Naive thymus-derived CD4-positive, alpha-beta T cell (primary cell): ENCODE measurements at regions of chr18 and their contacts with region 1.

Region 1: DNA sequence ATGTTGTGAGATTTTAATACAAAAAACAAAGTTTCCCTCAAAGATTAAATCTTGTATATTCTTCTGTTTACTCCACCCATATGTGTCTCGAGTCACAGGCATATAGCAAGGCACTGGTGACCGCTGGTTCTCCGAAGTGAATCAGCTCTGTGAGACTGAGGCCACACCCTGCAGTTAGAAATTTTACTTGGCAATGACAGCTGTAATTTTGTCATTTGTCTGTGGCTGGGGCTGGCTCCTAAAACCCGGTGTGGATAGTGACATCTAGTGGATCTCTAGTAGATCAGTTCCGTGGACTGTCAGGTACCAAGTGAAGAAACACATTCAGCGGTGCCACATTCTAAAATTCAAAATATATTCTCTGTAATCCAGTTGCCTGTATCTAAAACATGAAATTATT is 278.0 kb downstream of the NEDD4L start:
- DNase-seq: peak in 8 of 9 donors; percentile 32 to 71 (median 64)
- ATAC-seq: peak; percentile 90
- H3K4me3 ChIP-seq: no peak overlapping the region
- H3K4me3 Mint-ChIP-seq: peak overlapping the region in 9 of 10 donors; percentile 31 to 75 (median 57)
- H3K27ac ChIP-seq: no peak overlapping the region
- H3K27ac Mint-ChIP-seq: peak overlapping the region in 8 of 9 donors; percentile 7 to 75 (median 58)
- H3K4me1 ChIP-seq: peaks cover 0 to 13% of the 10 kb centered on the region in 2 donors
- H3K4me1 Mint-ChIP-seq: peaks cover 7 to 25% (median 22%) of the 10 kb centered on the region in 7 donors
- H3K27me3 ChIP-seq: no peaks in the 10 kb centered on the region
- H3K27me3 Mint-ChIP-seq: peaks cover 0 to 12% (median 0%) of the 10 kb centered on the region in 5 donors

Region 2: GRCh38 chr18:58117786-58118403 is 204.1 kb before region 1 on chr18:
- CTCF ChIA-PET with region 1: interaction called, 4 read pairs
- POLR2A ChIA-PET with region 1: no interaction called
- intact Hi-C with region 1: loop called in 1 of 2 experiments (anchors 1 kb)
- DNase-seq: no peak
- ATAC-seq: peak; percentile 41
- H3K4me3 ChIP-seq: no peak overlapping the region
- H3K4me3 Mint-ChIP-seq: no peak overlapping the region
- H3K27ac ChIP-seq: no peak overlapping the region
- H3K27ac Mint-ChIP-seq: no peak overlapping the region
- H3K4me1 ChIP-seq: no peaks in the 10 kb centered on the region
- H3K4me1 Mint-ChIP-seq: peaks cover 0 to 9% (median 0%) of the 10 kb centered on the region in 7 donors
- H3K27me3 ChIP-seq: no peaks in the 10 kb centered on the region
- H3K27me3 Mint-ChIP-seq: peaks cover 0 to 14% (median 4%) of the 10 kb centered on the region in 5 donors

Region 3: DNA sequence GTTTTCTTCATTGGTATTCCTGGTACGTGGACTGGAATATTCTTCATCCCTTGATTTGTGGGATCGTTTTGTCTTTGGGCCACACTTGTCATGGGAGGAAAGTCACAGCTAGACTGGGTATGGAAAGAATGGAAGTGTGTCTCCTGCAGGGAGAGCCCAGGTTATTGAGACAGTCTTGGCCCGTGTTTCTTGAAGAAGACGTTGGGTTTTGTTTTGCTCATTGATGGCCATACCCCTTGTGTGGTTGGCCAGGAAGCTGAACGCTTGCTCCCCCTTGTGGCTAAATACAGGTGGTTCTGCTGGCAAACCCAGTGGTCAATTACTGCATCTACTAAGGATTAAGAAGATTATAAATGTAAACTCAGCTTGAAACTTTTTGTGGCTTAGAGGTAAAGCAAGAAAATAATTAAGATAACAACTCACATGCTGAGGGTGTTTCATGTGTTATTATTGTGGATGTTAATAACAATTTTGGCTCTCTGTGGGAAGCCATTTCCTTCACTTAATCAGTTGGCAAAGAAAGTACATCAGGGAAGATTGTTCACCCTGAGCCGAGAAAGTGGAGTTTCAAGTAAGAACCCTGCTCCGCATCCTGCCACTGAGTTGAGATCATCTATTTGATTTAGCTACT is 186.2 kb before region 1 on chr18:
- CTCF ChIA-PET with region 1: no interaction called
- POLR2A ChIA-PET with region 1: no interaction called
- intact Hi-C with region 1: loop called in 1 of 2 experiments (anchors 1 kb)
- DNase-seq: peak in 7 of 9 donors; percentile 13 to 42 (median 28)
- ATAC-seq: peak; percentile 79
- H3K4me3 ChIP-seq: no peak overlapping the region
- H3K4me3 Mint-ChIP-seq: no peak overlapping the region
- H3K27ac ChIP-seq: no peak overlapping the region
- H3K27ac Mint-ChIP-seq: no peak overlapping the region
- H3K4me1 ChIP-seq: no peaks in the 10 kb centered on the region
- H3K4me1 Mint-ChIP-seq: peaks cover 5 to 14% (median 8%) of the 10 kb centered on the region in 7 donors
- H3K27me3 ChIP-seq: no peaks in the 10 kb centered on the region
- H3K27me3 Mint-ChIP-seq: peaks cover 12 to 31% (median 24%) of the 10 kb centered on the region in 5 donors

Region 4: DNA sequence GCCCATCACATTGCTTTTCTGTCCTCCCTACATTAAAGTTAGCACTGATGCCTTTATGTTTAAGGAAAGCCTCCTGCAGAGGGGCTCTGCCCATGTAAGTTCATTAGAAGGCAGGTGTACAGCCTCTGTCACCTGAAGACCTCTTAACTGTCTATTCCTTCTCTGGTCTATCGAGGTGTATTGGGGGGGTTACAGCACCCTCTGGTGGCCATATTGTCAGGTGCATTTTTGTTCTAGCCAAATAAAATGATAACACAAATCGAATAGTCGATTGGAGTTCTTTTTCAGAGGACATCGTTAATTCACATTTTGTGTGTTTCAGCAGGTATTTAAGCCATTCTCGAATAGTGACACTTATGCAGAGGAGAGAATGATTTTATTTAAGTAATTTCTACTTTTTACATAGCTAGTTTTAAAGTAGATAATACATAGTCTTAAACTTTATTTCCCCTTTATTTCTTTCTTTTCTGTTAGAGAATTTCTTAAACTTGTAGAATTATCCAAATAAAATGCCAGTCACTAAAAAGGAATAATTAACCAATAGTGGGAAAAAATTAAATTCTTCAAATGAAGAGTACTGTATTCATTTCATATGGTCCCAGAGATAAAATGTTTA is 141.1 kb before region 1 on chr18:
- CTCF ChIA-PET with region 1: interaction called, 12 read pairs
- POLR2A ChIA-PET with region 1: no interaction called
- intact Hi-C with region 1: loop called (anchors 1 kb)
- DNase-seq: peak; percentile 25 to 68 (median 50)
- ATAC-seq: peak; percentile 81
- H3K4me3 ChIP-seq: no peak overlapping the region
- H3K4me3 Mint-ChIP-seq: no peak overlapping the region
- H3K27ac ChIP-seq: no peak overlapping the region
- H3K27ac Mint-ChIP-seq: no peak overlapping the region
- H3K4me1 ChIP-seq: no peaks in the 10 kb centered on the region
- H3K4me1 Mint-ChIP-seq: peaks cover 0 to 4% (median 0%) of the 10 kb centered on the region in 7 donors
- H3K27me3 ChIP-seq: peaks cover 0 to 6% of the 10 kb centered on the region in 2 donors
- H3K27me3 Mint-ChIP-seq: peaks cover 0 to 12% (median 4%) of the 10 kb centered on the region in 5 donors

Region 5: DNA sequence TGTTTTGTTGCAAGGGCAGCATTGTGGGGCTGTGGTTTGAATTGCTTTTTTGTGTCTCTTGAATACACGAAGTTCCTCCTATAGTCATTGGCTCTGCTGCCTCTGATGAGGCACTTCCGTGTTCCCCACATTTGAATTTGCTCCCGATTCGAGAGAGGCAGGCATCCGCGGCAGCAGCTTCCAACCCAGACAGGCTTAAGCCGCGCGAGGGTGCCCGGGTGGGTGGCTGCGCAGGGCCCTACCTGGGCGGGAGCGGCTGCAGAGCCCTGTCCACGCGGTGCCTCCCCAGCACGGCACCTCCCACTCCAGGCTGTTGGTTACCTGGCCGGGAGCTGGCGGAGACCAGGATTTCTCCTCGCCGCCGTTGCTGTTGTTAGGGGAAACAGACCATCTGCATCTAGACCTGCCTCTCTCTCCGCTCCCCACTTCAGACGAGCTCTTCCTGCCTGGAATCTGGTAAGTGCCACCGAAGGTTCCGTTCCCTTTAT is 126.7 kb before region 1 on chr18:
- CTCF ChIA-PET with region 1: no interaction called
- POLR2A ChIA-PET with region 1: no interaction called
- intact Hi-C with region 1: loop called in 1 of 2 experiments (anchors 1 kb)
- DNase-seq: peak in 8 of 9 donors; percentile 12 to 43 (median 24)
- ATAC-seq: peak; percentile 61
- H3K4me3 ChIP-seq: peak overlapping the region; percentile 56
- H3K4me3 Mint-ChIP-seq: peak overlapping the region; percentile 75 to 91 (median 86)
- H3K27ac ChIP-seq: peak overlapping the region; percentile 9
- H3K27ac Mint-ChIP-seq: peak overlapping the region in 7 of 9 donors; percentile 0 to 81 (median 65)
- H3K4me1 ChIP-seq: peaks cover 0 to 5% of the 10 kb centered on the region in 2 donors
- H3K4me1 Mint-ChIP-seq: peaks cover 7 to 26% (median 26%) of the 10 kb centered on the region in 7 donors
- H3K27me3 ChIP-seq: no peaks in the 10 kb centered on the region
- H3K27me3 Mint-ChIP-seq: peaks cover 0 to 28% (median 6%) of the 10 kb centered on the region in 5 donors

Region 6: DNA sequence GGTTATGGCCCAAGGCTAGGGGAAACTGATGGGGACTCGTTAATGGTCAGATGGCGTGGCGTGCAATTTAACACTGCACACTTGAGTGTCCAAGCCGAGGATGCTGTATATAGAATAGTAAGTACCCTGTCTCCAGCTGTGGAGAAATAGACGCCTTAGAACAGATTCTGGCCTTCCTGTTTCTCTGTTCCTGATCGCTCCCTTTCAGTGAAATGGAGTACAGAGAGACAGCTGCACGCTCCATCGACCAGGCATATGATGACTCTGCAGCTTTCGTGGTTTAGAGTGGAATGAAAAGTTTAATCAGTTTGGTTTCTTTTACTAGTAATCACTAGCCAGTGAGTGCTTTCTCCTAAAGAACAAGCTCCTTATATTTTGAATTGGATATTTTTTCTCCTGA is 64.5 kb before region 1 on chr18:
- CTCF ChIA-PET with region 1: no interaction called
- POLR2A ChIA-PET with region 1: no interaction called
- intact Hi-C with region 1: no loop called
- DNase-seq: no peak
- ATAC-seq: no peak
- H3K4me3 ChIP-seq: no peak overlapping the region
- H3K4me3 Mint-ChIP-seq: no peak overlapping the region
- H3K27ac ChIP-seq: no peak overlapping the region
- H3K27ac Mint-ChIP-seq: no peak overlapping the region
- H3K4me1 ChIP-seq: no peaks in the 10 kb centered on the region
- H3K4me1 Mint-ChIP-seq: no peaks in the 10 kb centered on the region
- H3K27me3 ChIP-seq: no peaks in the 10 kb centered on the region
- H3K27me3 Mint-ChIP-seq: no peaks in the 10 kb centered on the region

Region 7: DNA sequence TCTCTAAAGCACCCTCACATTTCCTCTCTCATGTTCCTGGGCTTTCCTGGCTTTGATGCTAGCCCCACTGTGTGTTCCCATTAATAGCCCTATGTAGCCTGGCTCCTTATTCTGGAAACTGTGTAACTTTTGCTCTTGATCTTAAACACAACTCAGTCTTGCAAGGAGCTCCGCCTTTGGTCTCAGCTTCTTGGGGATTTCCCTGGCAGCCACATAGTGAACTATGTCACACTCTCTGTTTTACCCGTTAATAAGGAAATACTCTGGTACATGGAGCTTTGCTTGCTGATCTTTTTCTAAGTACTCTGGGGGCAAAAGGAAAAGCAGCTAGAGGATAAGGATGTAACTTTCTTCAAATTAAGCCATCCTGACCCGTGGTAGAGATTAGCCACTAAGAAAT is 18.6 kb before region 1 on chr18:
- CTCF ChIA-PET with region 1: interaction called, 18 read pairs
- POLR2A ChIA-PET with region 1: interaction called, 3 read pairs
- intact Hi-C with region 1: loop called (anchors 1 to 2 kb)
- DNase-seq: peak in 6 of 9 donors; percentile 21 to 48 (median 30)
- ATAC-seq: peak; percentile 80
- H3K4me3 ChIP-seq: no peak overlapping the region
- H3K4me3 Mint-ChIP-seq: peak overlapping the region; percentile 23 to 77 (median 64)
- H3K27ac ChIP-seq: no peak overlapping the region
- H3K27ac Mint-ChIP-seq: peak overlapping the region; percentile 12 to 84 (median 70)
- H3K4me1 ChIP-seq: peaks cover 0 to 23% of the 10 kb centered on the region in 2 donors
- H3K4me1 Mint-ChIP-seq: peaks cover 8 to 31% (median 22%) of the 10 kb centered on the region in 7 donors
- H3K27me3 ChIP-seq: no peaks in the 10 kb centered on the region
- H3K27me3 Mint-ChIP-seq: peaks cover 0 to 33% (median 0%) of the 10 kb centered on the region in 5 donors

Region 8: GRCh38 chr18:58311390-58311789 is 10.6 kb before region 1 on chr18:
- CTCF ChIA-PET with region 1: interaction called, 4 read pairs
- POLR2A ChIA-PET with region 1: interaction called, 5 read pairs
- intact Hi-C with region 1: loop called in 1 of 2 experiments (anchors 1 kb)
- DNase-seq: no peak
- ATAC-seq: no peak
- H3K4me3 ChIP-seq: no peak overlapping the region
- H3K4me3 Mint-ChIP-seq: peak overlapping the region; percentile 26 to 72 (median 46)
- H3K27ac ChIP-seq: peak overlapping the region; percentile 53
- H3K27ac Mint-ChIP-seq: peak overlapping the region in 8 of 9 donors; percentile 63 to 95 (median 84)
- H3K4me1 ChIP-seq: peaks cover 0 to 50% of the 10 kb centered on the region in 2 donors
- H3K4me1 Mint-ChIP-seq: peaks cover 14 to 83% (median 68%) of the 10 kb centered on the region in 7 donors
- H3K27me3 ChIP-seq: no peaks in the 10 kb centered on the region
- H3K27me3 Mint-ChIP-seq: peaks cover 0 to 20% (median 0%) of the 10 kb centered on the region in 5 donors